Activated naive CD4-positive, alpha-beta T cell treated with anti-CD3 and anti-CD28 coated beads, Interleukin-2, amount 10 ng/mL, durations not matched to agents 7 days and 5 days (primary cell): ENCODE measurements at regions of chr5 and their contacts with region 1.

Region 1: GRCh38 chr5:36690041-36690961 is 83.9 kb downstream of the SLC1A3 start:
- DNase-seq: peak; percentile 74
- H3K4me3 Mint-ChIP-seq: peak overlapping the region; percentile 77
- H3K27ac Mint-ChIP-seq: no peak overlapping the region
- H3K4me1 Mint-ChIP-seq: peaks cover 10% of the 10 kb centered on the region
- H3K27me3 Mint-ChIP-seq: peaks cover 46% of the 10 kb centered on the region

Region 2: GRCh38 chr5:36664781-36665180 is 25.5 kb before region 1 on chr5:
- CTCF ChIA-PET with region 1: no interaction called
- DNase-seq: no peak
- H3K4me3 Mint-ChIP-seq: no peak overlapping the region
- H3K27ac Mint-ChIP-seq: no peak overlapping the region
- H3K4me1 Mint-ChIP-seq: no peaks in the 10 kb centered on the region
- H3K27me3 Mint-ChIP-seq: peaks cover 9% of the 10 kb centered on the region

Region 3: GRCh38 chr5:36701085-36701698 is 10.9 kb after region 1 on chr5:
- CTCF ChIA-PET with region 1: interaction called, 13 read pairs
- DNase-seq: no peak
- H3K4me3 Mint-ChIP-seq: no peak overlapping the region
- H3K27ac Mint-ChIP-seq: no peak overlapping the region
- H3K4me1 Mint-ChIP-seq: no peaks in the 10 kb centered on the region
- H3K27me3 Mint-ChIP-seq: peaks cover 10% of the 10 kb centered on the region

Region 4: GRCh38 chr5:36719282-36719681 is 29.0 kb after region 1 on chr5:
- CTCF ChIA-PET with region 1: no interaction called
- DNase-seq: no peak
- H3K4me3 Mint-ChIP-seq: no peak overlapping the region
- H3K27ac Mint-ChIP-seq: no peak overlapping the region
- H3K4me1 Mint-ChIP-seq: peaks cover 13% of the 10 kb centered on the region
- H3K27me3 Mint-ChIP-seq: peaks cover 5% of the 10 kb centered on the region

Region 5: GRCh38 chr5:36790838-36791237 is 100.5 kb after region 1 on chr5:
- CTCF ChIA-PET with region 1: no interaction called
- DNase-seq: no peak
- H3K4me3 Mint-ChIP-seq: no peak overlapping the region
- H3K27ac Mint-ChIP-seq: no peak overlapping the region
- H3K4me1 Mint-ChIP-seq: no peaks in the 10 kb centered on the region
- H3K27me3 Mint-ChIP-seq: no peaks in the 10 kb centered on the region